Activated T-helper 1 cell treated with anti-CD3 and anti-CD28 coated beads, Interleukin-12 subunit alpha, Interleukin-12 subunit beta, Interleukin-2, Interleukin-4 antibody, amounts not matched to agents 30 ng/mL and 10 ng/mL and 1 ng/mL, durations not matched to agents 14 hours and 24 hours and 36 hours (primary cell): ENCODE measurements at regions of chr19 and their contacts with region 1.

Region 1: GRCh38 chr19:44304659-44305193 is at the start of gene ZNF235:
- DNase-seq: peak; percentile 60
- H3K4me3 Mint-ChIP-seq: peak within 1 kb of the TSS; percentile 90
- H3K27ac Mint-ChIP-seq: peak within 1 kb of the TSS; percentile 34
- H3K4me1 Mint-ChIP-seq: peaks cover 20% of the 10 kb centered on the region
- H3K27me3 Mint-ChIP-seq: no peaks in the 10 kb centered on the region
- total RNA-seq, gene ZNF235: 3.8 and 4.7 TPM in 2 replicates

Region 2: DNA sequence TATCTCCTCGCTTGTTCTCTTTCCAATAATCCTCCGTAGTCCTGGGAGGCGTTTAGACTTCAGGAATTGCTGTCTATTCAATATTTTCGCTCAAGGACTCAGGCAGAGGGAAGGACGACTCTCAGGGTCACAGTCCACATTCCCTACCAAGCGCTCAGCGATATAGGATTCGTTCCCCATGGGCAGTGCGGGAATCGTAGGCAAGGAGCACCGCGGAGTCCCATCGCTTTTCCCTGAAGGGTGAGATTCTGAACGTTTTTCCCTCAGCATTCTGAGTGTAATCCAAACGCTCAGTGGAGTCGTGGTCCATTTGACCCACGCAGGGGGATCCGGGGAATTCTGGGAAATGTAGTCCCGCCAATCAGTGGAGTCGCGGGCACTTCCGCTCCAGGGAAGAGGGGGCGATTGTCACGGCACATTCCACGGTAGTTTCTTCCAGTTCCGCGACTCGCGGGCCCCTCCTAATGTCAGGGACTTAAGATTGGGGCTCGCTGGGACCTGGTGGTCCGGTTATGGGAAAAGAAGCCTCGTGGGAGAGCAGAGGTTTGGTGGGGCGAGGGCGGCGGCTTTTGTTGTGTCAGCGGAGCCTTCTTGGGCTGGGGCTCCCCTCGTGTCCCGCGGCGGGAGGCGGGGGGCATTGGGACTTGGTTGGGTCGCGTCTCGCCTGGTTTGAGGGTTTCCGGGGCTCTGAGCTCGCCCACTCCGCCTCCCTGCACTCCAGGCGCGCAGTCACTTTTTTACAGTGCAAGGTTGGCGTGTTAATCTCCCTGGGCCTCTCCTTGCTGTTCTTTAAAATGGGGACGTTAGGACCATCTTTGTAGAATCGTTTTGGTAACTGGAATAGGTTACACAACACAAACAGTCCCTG is 163.3 kb before region 1 on chr19 and contains the start of gene ZNF234:
- intact Hi-C with region 1: loop called (anchors 1 kb)
- DNase-seq: peak; percentile 52
- H3K4me3 Mint-ChIP-seq: peak within 1 kb of the TSS; percentile 93
- H3K27ac Mint-ChIP-seq: peak within 1 kb of the TSS; percentile 76
- H3K4me1 Mint-ChIP-seq: peaks cover 14% of the 10 kb centered on the region
- H3K27me3 Mint-ChIP-seq: no peaks in the 10 kb centered on the region
- total RNA-seq, gene ZNF234: 8.4 and 10.3 TPM in 2 replicates